GM10248 (cell line): ENCODE measurements at regions of chr7 and their contacts with region 1.

Region 1: GRCh38 chr7:138595454-138595853 is 105.7 kb downstream of the SVOPL start:
- DNase-seq: no peak
- CTCF ChIP-seq: no peak

Region 2: GRCh38 chr7:138584696-138585095 is 10.8 kb before region 1 on chr7:
- CTCF ChIA-PET with region 1: interaction called, 10 read pairs
- POLR2A ChIA-PET with region 1: no interaction called
- DNase-seq: no peak
- CTCF ChIP-seq: no peak